ENCODE measurements at regions of chr13 and their contacts with region 1.

Region 1: DNA sequence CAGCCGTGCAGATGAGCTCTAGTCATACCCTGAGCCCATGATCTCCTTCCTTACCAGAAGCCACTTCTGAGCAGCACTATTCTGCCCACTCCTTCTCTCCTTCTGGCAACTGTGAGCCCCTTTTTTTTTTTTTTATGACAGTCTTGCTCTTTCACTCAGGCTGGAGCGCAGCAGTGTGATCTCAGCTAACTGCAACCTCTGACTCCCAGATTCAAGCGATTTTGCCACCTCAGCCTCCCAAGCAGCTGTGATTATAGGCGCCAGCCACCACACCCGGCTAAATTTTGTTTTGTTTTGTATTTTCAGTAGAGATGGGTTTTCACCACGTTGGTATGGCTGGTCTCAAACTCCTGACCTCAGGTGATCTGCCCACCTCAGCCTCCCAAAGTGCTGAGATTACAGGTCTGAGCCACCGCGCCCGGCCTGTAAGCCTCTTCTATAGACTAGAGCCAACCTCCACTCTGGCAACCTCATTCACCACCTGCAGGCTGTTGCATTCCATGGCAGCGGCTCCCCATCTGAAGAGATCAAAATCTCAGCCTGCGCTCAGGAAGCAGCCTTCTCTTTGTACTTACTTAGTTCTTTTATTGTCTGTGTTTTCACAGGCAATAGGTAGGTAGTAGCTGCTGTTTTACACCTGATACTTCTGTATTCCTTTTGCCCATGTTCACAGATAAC is 34.8 kb upstream of the NDFIP2 start:
- DNase-seq: no peak
- H3K4me3 Mint-ChIP-seq: peak overlapping the region; percentile 23
- H3K27ac Mint-ChIP-seq: peak overlapping the region; percentile 78
- H3K4me1 Mint-ChIP-seq: peaks cover 56% of the 10 kb centered on the region
- H3K27me3 Mint-ChIP-seq: no peaks in the 10 kb centered on the region

Region 2: DNA sequence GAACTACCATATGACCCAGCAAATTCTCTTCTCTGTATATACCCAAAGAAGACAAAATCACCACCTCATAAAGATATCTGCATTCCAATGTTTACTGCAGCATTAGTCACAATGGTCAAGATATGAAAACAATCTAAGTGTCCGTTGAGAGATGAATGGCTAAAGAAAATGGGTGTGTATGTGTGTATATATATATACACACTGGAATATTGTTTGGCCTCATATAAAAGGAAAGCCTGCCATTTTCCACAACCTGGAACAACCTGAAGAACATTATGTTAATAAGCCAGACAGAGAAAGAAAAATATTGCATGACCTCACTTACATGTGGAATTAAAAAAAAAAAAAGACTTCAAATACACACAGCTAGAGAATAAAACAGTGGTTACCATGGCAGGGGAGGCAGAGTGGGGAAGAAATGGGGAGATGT is 10.5 kb before region 1 on chr13:
- intact Hi-C with region 1: loop called (anchors 1 kb)
- DNase-seq: no peak
- H3K4me3 Mint-ChIP-seq: no peak overlapping the region
- H3K27ac Mint-ChIP-seq: no peak overlapping the region
- H3K4me1 Mint-ChIP-seq: peaks cover 33% of the 10 kb centered on the region
- H3K27me3 Mint-ChIP-seq: no peaks in the 10 kb centered on the region

Measured in activated T-helper 1 cell treated with anti-CD3 and anti-CD28 coated beads, Interleukin-12 subunit alpha, Interleukin-12 subunit beta, Interleukin-2, Interleukin-4 antibody, amounts not matched to agents 30 ng/mL and 10 ng/mL and 1 ng/mL, durations not matched to agents 14 hours and 24 hours and 36 hours (primary cell).